AG04449 (cell line): ENCODE measurements at regions of chr9 and their contacts with region 1.

Region 1: DNA sequence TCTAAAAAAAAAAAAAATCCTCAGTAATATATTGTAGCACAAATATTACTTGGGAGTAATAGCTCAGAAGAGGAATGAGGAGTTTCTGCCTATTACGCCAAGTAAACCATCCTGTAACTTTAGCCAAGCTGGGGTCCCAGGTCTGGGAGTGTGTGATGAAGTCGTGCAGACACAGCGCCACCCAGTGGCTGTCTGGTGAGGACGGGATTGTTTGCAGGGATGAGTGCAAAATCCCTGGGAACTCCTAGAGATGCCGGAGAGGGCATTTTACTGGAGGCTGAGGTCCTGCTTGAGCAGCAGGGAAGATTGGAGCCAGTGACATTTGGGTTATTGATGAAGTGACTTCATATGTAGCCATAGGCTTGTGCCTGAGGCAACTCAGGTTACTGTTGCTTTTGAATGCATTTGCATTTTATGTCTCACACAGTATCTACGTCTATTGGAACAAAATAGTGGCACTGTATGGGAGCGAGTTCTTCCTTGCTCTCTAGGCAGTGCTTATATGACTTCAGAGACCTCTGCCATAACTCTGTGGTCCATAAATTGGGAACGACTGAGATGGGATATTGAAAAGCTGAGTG is 72.8 kb downstream of the PSAT1 start:
- DNase-seq: no peak
- H3K4me3 ChIP-seq: no peak overlapping the region
- CTCF ChIP-seq: peak; percentile 84

Region 2: GRCh38 chr9:78357165-78357873 is 12.4 kb before region 1 on chr9:
- CTCF ChIA-PET with region 1: interaction called, 23 read pairs
- POLR2A ChIA-PET with region 1: no interaction called
- DNase-seq: no peak
- H3K4me3 ChIP-seq: no peak overlapping the region
- CTCF ChIP-seq: no peak

Region 3: GRCh38 chr9:78383130-78383529 is 13.4 kb after region 1 on chr9:
- CTCF ChIA-PET with region 1: interaction called, 101 read pairs
- POLR2A ChIA-PET with region 1: no interaction called
- DNase-seq: no peak
- H3K4me3 ChIP-seq: no peak overlapping the region
- CTCF ChIP-seq: no peak